Panc1 (cell line): ENCODE measurements at regions of chr3 and their contacts with region 1.

Region 1: DNA sequence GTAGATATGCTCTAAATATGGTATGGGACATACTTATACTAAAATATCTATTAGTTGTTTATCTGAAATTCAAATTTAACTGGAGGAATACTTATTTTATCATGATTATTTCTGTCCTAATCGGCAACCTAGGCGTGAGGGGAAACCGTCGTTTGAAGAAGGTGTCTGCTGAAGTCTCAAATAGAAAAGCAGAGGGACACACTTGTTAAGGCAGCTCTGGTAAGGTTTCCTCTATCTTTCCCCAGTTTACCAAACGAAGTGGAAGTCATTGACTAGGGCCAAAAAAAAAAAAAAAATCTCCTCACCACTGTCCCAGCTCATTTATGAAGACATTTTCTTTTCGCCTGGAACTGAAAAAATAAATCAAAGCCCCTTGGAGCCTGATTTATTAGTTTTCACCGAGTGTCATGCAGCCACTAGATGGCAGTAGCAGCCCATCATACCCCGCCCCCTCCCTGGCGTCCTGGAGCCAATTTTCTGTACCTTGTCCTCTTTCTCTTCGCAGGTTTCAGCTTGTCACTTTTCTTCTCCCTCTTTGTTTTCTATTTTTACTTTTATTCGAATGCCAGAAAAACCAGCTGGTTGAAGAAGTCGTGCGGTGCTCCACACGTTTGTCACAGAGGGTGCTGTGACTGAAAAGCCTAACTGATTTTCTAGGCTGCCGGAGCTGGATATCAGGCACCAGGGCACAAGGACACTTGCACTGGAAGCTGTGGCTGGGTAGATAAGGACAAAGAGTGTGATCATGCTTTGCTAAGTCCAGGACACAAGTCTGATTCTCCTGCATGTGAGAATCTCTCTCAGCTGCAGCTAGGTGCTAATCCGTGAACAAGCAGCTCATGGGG is 238.7 kb downstream of the ZPLD1 start:
- DNase-seq: peak; percentile 18
- ATAC-seq: peak; percentile 84
- H3K4me3 ChIP-seq: peak overlapping the region; percentile 7 to 28; a peak in 1 of 4 replicates
- H3K27ac ChIP-seq: no peak overlapping the region
- H3K4me1 ChIP-seq: 0 out of 2 replicates have a peak, but pooled peaks cover 3% of the 10 kb centered on the region
- H3K27me3 ChIP-seq: no peaks in the 10 kb centered on the region
- CTCF ChIP-seq: peak; percentile 93

Region 2: DNA sequence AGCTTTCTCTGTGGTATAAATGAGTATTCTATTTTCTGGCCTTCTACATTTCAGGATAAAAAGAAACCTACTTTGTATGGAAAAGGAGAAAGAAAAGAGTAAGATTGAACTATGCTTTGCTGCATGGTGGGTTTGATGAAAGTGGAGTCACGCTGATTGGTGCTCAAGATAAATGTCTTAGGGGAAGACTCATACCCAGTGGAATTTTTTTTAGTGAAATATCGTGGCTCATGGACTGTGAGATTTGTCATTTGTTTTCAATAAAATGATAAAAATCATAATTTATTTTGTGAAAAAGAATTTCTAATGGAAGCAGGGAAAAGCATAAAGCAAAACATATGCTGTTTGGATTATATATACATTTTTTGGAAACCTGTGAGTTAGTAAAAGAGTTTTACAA is 53.8 kb after region 1 on chr3:
- CTCF ChIA-PET with region 1: no interaction called
- POLR2A ChIA-PET with region 1: interaction called, 11 read pairs
- in situ Hi-C with region 1: no loop called
- intact Hi-C with region 1: no loop called
- DNase-seq: no peak
- ATAC-seq: no peak
- H3K4me3 ChIP-seq: no peak overlapping the region
- H3K27ac ChIP-seq: no peak overlapping the region
- H3K4me1 ChIP-seq: no peaks in the 10 kb centered on the region
- H3K27me3 ChIP-seq: no peaks in the 10 kb centered on the region
- CTCF ChIP-seq: no peak